ENCODE measurements at regions of chr5 and their contacts with region 1.

Region 1: GRCh38 chr5:126801992-126802294 is 25.0 kb downstream of the LMNB1 start:
- DNase-seq: peak; percentile 40
- ATAC-seq: peak; percentile 48; the same call in 1 of the 2 replicates
- H3K4me3 ChIP-seq: no peak overlapping the region
- H3K27ac ChIP-seq: no peak overlapping the region
- H3K4me1 ChIP-seq: peaks cover 9% of the 10 kb centered on the region; the same call in 1 of the 2 replicates
- H3K27me3 ChIP-seq: no peaks in the 10 kb centered on the region
- CTCF ChIP-seq: peak; percentile 57

Region 2: GRCh38 chr5:126656396-126657007 is 145.4 kb before region 1 on chr5:
- CTCF ChIA-PET with region 1: no interaction called
- POLR2A ChIA-PET with region 1: no interaction called
- intact Hi-C with region 1: loop called (anchors 1 kb)
- DNase-seq: peak; percentile 48
- ATAC-seq: no peak
- H3K4me3 ChIP-seq: no peak overlapping the region
- H3K27ac ChIP-seq: no peak overlapping the region
- H3K4me1 ChIP-seq: no peaks in the 10 kb centered on the region
- H3K27me3 ChIP-seq: no peaks in the 10 kb centered on the region
- CTCF ChIP-seq: peak; percentile 82

Region 3: DNA sequence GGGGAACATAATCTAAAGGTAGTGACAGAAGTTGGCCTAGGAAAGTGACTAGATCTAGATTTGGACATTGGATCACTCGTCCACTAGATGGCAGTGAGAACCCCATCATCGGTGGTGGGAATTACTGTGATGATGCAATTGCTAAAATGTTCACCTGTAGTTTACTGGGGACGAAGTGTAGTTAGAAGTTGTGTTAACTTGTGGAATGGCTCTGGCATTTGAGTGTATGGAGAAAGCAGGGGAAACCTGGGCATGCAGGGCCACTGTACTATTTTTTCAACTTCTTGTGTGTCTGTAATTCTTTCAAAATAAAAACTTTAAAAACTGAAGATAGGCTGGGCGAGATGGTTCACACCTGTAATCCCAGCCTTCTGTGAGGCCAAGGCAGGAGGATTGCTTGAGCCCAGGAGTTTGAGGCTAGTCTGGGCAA is 125.7 kb before region 1 on chr5:
- CTCF ChIA-PET with region 1: interaction called, 6 read pairs
- POLR2A ChIA-PET with region 1: no interaction called
- intact Hi-C with region 1: loop called (anchors 1 kb)
- DNase-seq: peak; percentile 78
- ATAC-seq: peak; percentile 50
- H3K4me3 ChIP-seq: no peak overlapping the region
- H3K27ac ChIP-seq: no peak overlapping the region
- H3K4me1 ChIP-seq: no peaks in the 10 kb centered on the region
- H3K27me3 ChIP-seq: no peaks in the 10 kb centered on the region
- CTCF ChIP-seq: peak; percentile 85

Measured in PC-3 (cell line).